Mammary epithelial cell (primary cell): ENCODE measurements at regions of chr4 and their contacts with region 1.

Region 1: GRCh38 chr4:153750197-153750817 is 9.5 kb downstream of the RNF175 start:
- DNase-seq: peak; percentile 80
- H3K4me3 ChIP-seq: no peak overlapping the region
- H3K27ac ChIP-seq: peak overlapping the region; percentile 24
- H3K4me1 ChIP-seq: peaks cover 31% of the 10 kb centered on the region
- H3K27me3 ChIP-seq: no peaks in the 10 kb centered on the region
- CTCF ChIP-seq: peak; percentile 82 to 86

Region 2: GRCh38 chr4:153344131-153345010 is 405.9 kb before region 1 on chr4 and contains the start of gene MND1:
- CTCF ChIA-PET with region 1: no interaction called
- dilution Hi-C with region 1: no loop called
- in situ Hi-C with region 1: loop called in 1 of 2 experiments (anchors 25 kb)
- intact Hi-C with region 1: loop called (anchors 1 kb)
- DNase-seq: peak; percentile 80
- H3K4me3 ChIP-seq: peak within 1 kb of the TSS; percentile 58 to 95 (median 86)
- H3K27ac ChIP-seq: peak within 1 kb of the TSS; percentile 93
- H3K4me1 ChIP-seq: peaks cover 12% of the 10 kb centered on the region
- H3K27me3 ChIP-seq: no peaks in the 10 kb centered on the region
- CTCF ChIP-seq: peak in 1 of 2 donors; percentile 84
- total RNA-seq, gene MND1: 0.83 to 10.4 TPM

Region 3: DNA sequence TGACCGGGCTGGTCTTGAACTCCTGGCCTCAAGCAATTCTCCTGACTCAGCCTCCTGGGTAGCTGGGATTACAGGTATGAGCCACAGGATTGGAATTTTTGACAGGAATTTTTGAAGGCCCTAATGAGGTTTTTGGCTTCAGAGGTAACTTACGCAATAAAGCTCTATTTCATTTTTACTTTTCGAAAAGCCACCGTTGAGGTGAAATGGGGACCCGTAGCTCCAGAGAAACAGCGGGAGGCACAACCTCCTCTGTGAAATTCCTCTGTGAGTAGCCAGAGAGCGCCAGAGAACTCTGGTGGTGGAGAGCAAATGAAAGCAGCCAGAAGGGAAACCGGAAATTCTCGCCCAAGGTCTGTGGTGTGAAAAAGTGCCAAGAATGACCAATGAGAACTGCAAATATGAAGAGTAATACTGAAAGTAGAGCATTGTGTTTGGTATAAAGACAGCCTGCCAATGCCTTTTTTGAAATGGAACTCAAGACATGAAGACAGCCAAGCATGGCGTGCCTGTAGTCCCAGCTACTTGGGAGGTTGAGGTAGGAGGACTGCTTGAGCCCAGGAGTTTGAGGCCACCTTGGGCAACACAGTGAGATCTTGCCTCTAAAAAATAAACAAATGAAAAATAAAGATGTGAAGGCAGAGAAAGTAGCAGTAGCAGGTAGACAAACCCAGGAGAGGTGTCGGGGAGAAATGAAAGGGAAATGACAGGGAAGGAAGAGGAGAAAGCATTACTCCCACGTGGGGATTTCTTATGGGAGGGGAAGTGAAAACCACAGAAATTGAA is 317.1 kb before region 1 on chr4:
- CTCF ChIA-PET with region 1: no interaction called
- dilution Hi-C with region 1: no loop called
- in situ Hi-C with region 1: no loop called
- intact Hi-C with region 1: loop called (anchors 2 kb)
- DNase-seq: peak; percentile 94
- H3K4me3 ChIP-seq: no peak overlapping the region
- H3K27ac ChIP-seq: peak overlapping the region; percentile 52
- H3K4me1 ChIP-seq: peaks cover 11% of the 10 kb centered on the region
- H3K27me3 ChIP-seq: no peaks in the 10 kb centered on the region
- CTCF ChIP-seq: peak; percentile 75 to 84

Region 4: GRCh38 chr4:153549401-153549800 is 200.9 kb before region 1 on chr4:
- CTCF ChIA-PET with region 1: no interaction called
- dilution Hi-C with region 1: no loop called
- in situ Hi-C with region 1: no loop called
- intact Hi-C with region 1: no loop called
- DNase-seq: no peak
- H3K4me3 ChIP-seq: no peak overlapping the region
- H3K27ac ChIP-seq: no peak overlapping the region
- H3K4me1 ChIP-seq: no peaks in the 10 kb centered on the region
- H3K27me3 ChIP-seq: no peaks in the 10 kb centered on the region
- CTCF ChIP-seq: no peak

Region 5: GRCh38 chr4:153564630-153565525 is 185.4 kb before region 1 on chr4:
- CTCF ChIA-PET with region 1: no interaction called
- dilution Hi-C with region 1: no loop called
- in situ Hi-C with region 1: no loop called
- intact Hi-C with region 1: no loop called
- DNase-seq: no peak
- H3K4me3 ChIP-seq: no peak overlapping the region
- H3K27ac ChIP-seq: no peak overlapping the region
- H3K4me1 ChIP-seq: no peaks in the 10 kb centered on the region
- H3K27me3 ChIP-seq: no peaks in the 10 kb centered on the region
- CTCF ChIP-seq: no peak

Region 6: GRCh38 chr4:153634738-153635353 is 115.5 kb before region 1 on chr4:
- CTCF ChIA-PET with region 1: interaction called, 6 read pairs
- dilution Hi-C with region 1: loop called (anchors 5 kb)
- in situ Hi-C with region 1: loop called (anchors 5 to 10 kb)
- intact Hi-C with region 1: loop called (anchors 1 kb)
- DNase-seq: no peak
- H3K4me3 ChIP-seq: no peak overlapping the region
- H3K27ac ChIP-seq: no peak overlapping the region
- H3K4me1 ChIP-seq: no peaks in the 10 kb centered on the region
- H3K27me3 ChIP-seq: no peaks in the 10 kb centered on the region
- CTCF ChIP-seq: peak; percentile 71 to 75

Region 7: DNA sequence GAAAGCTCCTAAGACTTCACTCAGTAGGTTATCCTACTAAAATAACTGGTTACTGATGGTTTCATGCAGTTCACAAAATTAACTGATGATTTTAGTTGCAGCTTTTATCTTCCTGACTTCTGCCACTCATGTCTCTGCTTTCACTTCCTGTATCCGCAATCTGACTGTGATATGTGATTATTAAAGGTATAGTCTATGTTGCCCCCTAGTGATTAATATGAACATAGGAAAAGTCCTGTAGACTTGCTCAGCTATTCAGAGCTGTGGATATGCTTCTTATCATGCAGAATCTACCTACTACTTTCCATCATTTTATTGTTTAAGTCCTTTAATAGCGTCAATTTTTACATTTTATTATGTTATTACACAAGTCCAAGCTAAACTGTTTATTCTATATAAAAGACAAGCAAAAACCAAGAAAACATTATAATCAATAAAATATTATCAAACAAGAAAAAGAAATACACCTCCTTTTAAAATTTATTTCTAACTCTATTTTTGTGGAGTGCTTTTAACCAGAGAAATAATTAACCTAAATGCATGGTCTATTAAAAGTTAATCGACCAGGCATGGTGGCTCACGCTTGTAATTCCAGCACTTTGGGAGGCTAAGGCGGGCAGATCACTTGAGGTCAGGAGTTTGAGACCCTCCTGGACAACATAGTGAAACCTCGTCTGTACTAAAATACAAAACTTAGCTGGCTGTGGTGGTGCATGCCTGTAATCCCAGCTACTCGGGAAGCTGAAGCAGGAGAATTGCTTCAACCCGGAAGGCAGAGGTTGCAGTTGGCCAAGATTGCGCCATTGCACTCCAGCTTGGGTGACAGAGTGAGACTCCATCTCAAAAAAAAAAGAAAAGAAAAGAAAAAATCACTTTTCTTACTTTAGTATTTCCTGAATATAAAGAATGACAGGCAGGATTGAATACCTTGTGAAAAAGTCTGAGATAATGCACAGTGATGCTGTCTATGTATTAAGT is 106.6 kb before region 1 on chr4:
- CTCF ChIA-PET with region 1: no interaction called
- dilution Hi-C with region 1: loop called (anchors 5 kb)
- in situ Hi-C with region 1: loop called in 1 of 2 experiments (anchors 10 kb)
- intact Hi-C with region 1: no loop called
- DNase-seq: peak; percentile 54
- H3K4me3 ChIP-seq: no peak overlapping the region
- H3K27ac ChIP-seq: no peak overlapping the region
- H3K4me1 ChIP-seq: peaks cover 4% of the 10 kb centered on the region
- H3K27me3 ChIP-seq: no peaks in the 10 kb centered on the region
- CTCF ChIP-seq: peak; percentile 48 to 56

Region 8: GRCh38 chr4:153731239-153731638 is 19.1 kb before region 1 on chr4:
- CTCF ChIA-PET with region 1: no interaction called
- dilution Hi-C with region 1: no loop called
- in situ Hi-C with region 1: no loop called
- intact Hi-C with region 1: loop called (anchors 1 kb)
- DNase-seq: peak; percentile 92
- H3K4me3 ChIP-seq: no peak overlapping the region
- H3K27ac ChIP-seq: peak overlapping the region; percentile 99
- H3K4me1 ChIP-seq: peaks cover 13% of the 10 kb centered on the region
- H3K27me3 ChIP-seq: no peaks in the 10 kb centered on the region
- CTCF ChIP-seq: no peak

Region 9: DNA sequence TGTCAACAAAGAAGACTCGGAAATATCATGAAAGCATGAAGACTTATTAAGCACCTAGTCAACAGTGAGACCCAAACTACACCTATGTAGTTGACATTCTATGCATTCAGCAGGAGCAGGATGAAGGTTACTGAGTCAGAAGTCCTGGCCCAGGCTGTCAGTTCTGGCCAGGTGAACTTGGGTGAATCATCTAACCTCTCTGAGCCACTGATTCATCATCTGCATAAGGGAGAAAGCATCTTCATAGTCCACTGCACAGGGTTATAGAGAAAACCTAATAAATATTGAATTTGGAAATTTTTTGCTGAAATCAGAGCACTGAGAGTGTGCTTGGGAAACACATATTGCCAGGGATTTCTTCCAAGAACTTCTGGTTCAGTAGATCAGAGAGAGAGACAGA is 334.6 kb after region 1 on chr4:
- CTCF ChIA-PET with region 1: no interaction called
- dilution Hi-C with region 1: no loop called
- in situ Hi-C with region 1: no loop called
- intact Hi-C with region 1: no loop called
- DNase-seq: peak; percentile 78
- H3K4me3 ChIP-seq: no peak overlapping the region
- H3K27ac ChIP-seq: no peak overlapping the region
- H3K4me1 ChIP-seq: peaks cover 23% of the 10 kb centered on the region
- H3K27me3 ChIP-seq: no peaks in the 10 kb centered on the region
- CTCF ChIP-seq: no peak